ENCODE measurements at regions of chr1 and their contacts with region 1.

Region 1: GRCh38 chr1:233904633-233905415 is at the start of gene SLC35F3:
- DNase-seq: peak in 1 of 5 donors; percentile 21
- ATAC-seq: peak in 3 of 4 donors; percentile 53 to 76 (median 66)
- H3K4me3 ChIP-seq: peak within 1 kb of the TSS in 9 of 12 donors; percentile 2 to 44 (median 17)
- H3K27ac ChIP-seq: no peak within 1 kb of the TSS
- H3K4me1 ChIP-seq: peaks cover 0 to 13% (median 0%) of the 10 kb centered on the region in 12 donors
- H3K27me3 ChIP-seq: peaks cover 15 to 78% (median 36%) of the 10 kb centered on the region in 9 donors
- CTCF ChIP-seq: peak in 5 of 12 donors; percentile 22 to 33 (median 27)
- POLR2A ChIP-seq: no peak
- total RNA-seq, gene SLC35F3: 0.11 TPM in 2 of 9 donors, not detected in the others

Region 2: DNA sequence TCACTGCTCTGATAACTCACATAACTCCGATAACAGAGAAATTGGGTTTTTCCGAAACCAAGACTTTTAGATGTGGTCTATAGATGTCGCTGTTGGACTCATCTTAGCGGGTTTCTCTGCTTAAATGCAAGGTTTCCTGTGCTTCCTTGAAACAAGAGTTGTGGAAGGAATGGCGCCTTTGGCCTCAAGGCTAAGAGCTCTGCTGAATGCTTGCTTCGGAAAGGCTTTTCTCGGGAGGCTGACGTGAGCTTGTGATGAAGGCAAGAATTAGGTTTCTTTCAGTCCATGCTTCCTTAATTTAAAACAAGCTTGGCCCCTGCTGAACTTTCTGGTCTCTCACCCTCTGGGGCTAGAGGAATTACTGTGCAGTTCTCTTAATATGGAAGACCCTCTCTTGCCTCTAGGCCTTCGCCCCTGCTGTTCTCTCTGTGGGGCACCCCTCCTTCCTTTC is 463.8 kb before region 1 on chr1:
- intact Hi-C with region 1: loop called in 1 of 10 experiments (anchors 10 kb)
- DNase-seq: no peak
- ATAC-seq: peak in 2 of 4 donors; percentile 20 to 49
- H3K4me3 ChIP-seq: no peak overlapping the region
- H3K27ac ChIP-seq: no peak overlapping the region
- H3K4me1 ChIP-seq: no peaks in the 10 kb centered on the region
- H3K27me3 ChIP-seq: peaks cover 0 to 24% (median 5%) of the 10 kb centered on the region in 9 donors
- CTCF ChIP-seq: peak; percentile 28 to 72 (median 60)
- POLR2A ChIP-seq: no peak

Region 3: DNA sequence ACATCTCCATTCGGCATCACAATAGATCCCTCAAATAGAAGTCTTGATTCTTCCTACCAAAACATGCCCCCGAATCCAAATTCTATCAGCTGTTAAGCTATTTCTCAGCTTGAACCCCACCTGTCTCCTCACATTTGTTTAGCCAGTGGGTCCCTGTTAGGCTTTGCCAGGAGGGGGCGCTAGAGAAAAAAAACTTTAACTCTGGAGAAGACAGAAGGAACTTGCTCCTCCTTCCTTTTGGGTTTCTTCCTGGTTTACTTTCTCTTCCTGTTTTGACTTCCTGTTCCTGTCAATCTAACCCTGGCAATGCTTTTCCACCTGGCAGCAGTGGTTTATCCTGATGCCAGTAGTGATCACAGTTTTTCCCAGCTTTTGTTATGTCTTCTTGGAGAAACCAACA is 386.5 kb before region 1 on chr1:
- intact Hi-C with region 1: loop called in 1 of 10 experiments (anchors 5 kb)
- DNase-seq: no peak
- ATAC-seq: no peak
- H3K4me3 ChIP-seq: no peak overlapping the region
- H3K27ac ChIP-seq: no peak overlapping the region
- H3K4me1 ChIP-seq: no peaks in the 10 kb centered on the region
- H3K27me3 ChIP-seq: no peaks in the 10 kb centered on the region
- CTCF ChIP-seq: peak; percentile 32 to 61 (median 48)
- POLR2A ChIP-seq: no peak

Region 4: DNA sequence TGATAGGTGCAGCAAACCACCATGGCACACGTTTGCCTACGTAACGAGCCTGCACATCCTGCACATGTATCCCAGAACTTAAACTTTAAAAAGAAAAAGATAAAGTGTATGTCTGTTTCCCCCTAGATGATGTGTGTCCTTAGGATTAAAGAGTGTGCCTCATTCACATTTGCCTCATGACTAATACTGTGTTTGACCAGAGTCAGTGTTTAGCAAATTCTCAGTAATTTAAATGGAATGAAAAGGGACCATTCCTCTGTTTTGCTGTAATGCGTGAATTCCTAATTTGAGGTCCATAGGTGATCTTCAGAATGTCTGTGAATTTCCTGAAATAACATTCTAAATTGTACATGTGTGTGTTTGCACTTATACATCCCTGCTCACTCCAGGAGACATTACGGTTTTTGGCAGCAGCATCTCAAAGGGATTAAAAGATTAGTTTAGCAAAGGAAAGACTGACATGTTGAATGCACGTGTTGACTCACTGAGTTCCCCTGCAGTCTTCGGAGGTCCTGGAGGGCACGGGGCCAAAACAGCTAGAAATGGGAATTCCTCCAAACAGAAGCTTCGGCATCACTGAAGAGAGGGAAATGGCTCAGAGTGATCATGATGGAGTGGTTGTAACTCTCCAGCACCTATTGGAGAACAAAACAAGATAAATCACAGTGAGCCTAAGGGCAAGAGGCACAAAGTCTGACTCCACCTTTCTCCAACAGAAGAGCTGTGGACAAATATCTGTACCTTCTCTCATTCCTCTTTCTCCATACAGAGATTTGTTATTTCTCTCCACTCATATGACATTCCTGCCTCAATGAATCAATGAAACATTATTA is 19.4 kb before region 1 on chr1:
- intact Hi-C with region 1: no loop called
- DNase-seq: no peak
- ATAC-seq: no peak
- H3K4me3 ChIP-seq: no peak overlapping the region
- H3K27ac ChIP-seq: no peak overlapping the region
- H3K4me1 ChIP-seq: no peaks in the 10 kb centered on the region
- H3K27me3 ChIP-seq: peaks cover 0 to 10% (median 0%) of the 10 kb centered on the region in 9 donors
- CTCF ChIP-seq: no peak
- POLR2A ChIP-seq: no peak

Region 5: DNA sequence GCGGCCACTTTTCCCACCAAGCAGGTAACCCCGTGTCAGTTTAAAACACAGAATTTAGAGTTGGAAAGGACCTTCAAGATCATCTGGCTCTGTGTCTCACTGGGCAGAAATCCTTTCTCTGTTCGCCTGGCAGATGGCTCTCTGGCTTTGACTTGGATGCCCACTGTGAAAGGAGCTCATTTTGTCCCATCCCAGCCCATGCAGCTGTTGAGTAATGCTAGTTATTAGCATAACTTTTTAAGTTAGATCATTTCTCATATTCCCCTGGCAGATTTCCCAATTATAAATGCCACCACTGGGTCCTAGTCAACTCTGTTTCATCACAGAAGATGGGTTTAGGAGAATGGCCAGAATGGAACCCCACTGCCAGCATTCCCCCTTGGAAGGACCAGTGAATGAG is 55.6 kb after region 1 on chr1:
- intact Hi-C with region 1: no loop called
- DNase-seq: no peak
- ATAC-seq: no peak
- H3K4me3 ChIP-seq: no peak overlapping the region
- H3K27ac ChIP-seq: no peak overlapping the region
- H3K4me1 ChIP-seq: no peaks in the 10 kb centered on the region
- H3K27me3 ChIP-seq: peaks cover 0 to 2% (median 0%) of the 10 kb centered on the region in 9 donors
- CTCF ChIP-seq: no peak
- POLR2A ChIP-seq: no peak

Region 6: DNA sequence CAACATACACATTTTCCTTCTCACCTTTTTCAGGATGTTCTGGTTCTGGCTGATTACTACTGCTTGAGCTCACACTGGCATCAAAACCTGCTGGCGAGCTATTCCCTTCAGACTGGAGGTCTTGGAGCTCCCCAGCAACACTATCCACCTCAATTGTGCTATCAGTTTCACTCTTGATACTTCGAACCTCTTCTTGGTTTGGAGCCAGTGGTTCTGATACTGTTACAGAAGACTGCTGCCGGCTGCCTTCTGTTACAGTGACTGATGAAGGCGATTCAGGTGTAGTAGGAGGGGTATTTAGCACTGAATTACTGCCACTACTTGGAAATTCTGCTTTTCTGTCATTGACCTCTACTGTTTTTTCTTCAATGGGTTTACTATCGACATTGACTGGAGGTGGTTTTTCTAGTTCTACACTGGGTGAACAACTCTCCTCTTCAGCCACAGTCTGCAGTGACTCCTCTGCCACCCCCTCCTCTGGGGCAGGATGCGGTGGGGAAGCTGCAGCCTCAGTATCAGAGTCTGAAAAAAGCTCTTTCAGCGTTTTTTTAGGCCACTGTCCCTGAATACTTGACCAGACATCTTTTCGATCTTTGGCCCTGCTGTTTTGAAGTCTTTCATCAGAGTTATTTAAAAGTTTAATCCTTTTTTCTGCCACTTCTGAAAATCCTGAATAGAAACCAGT is 1276.9 kb after region 1 on chr1:
- intact Hi-C with region 1: no loop called
- DNase-seq: no peak
- ATAC-seq: no peak
- H3K4me3 ChIP-seq: no peak overlapping the region
- H3K27ac ChIP-seq: no peak overlapping the region
- H3K4me1 ChIP-seq: no peaks in the 10 kb centered on the region
- H3K27me3 ChIP-seq: no peaks in the 10 kb centered on the region
- CTCF ChIP-seq: no peak
- POLR2A ChIP-seq: no peak